ENCODE measurements at regions of chr12 and their contacts with region 1.

Region 1: GRCh38 chr12:65602610-65603295 is 221.5 kb upstream of the HMGA2 start:
- DNase-seq: peak; percentile 77
- H3K4me3 Mint-ChIP-seq: no peak overlapping the region
- H3K27ac Mint-ChIP-seq: no peak overlapping the region
- H3K4me1 Mint-ChIP-seq: peaks cover 2% of the 10 kb centered on the region
- H3K27me3 Mint-ChIP-seq: peaks cover 20% of the 10 kb centered on the region

Region 2: DNA sequence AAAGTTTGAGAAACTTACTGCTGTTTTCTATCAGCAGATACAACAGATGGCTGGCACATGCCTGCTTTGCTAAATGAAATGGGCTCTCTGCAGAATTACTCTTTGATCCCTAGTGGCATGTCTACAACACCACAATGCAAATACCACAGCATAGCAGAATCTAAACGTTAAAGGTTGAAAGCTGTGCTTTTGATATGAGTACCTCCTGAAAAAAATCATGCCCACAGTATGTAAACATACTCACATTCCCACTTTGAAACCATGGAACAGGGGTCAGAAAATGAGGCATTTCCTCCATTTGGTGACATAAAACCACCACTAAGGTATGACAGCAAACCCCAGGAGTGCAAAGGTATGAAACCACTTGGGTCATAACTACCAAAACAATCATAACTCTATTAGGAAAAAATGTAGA is 489.1 kb before region 1 on chr12:
- intact Hi-C with region 1: no loop called
- DNase-seq: no peak
- H3K4me3 Mint-ChIP-seq: no peak overlapping the region
- H3K27ac Mint-ChIP-seq: no peak overlapping the region
- H3K4me1 Mint-ChIP-seq: no peaks in the 10 kb centered on the region
- H3K27me3 Mint-ChIP-seq: peaks cover 47% of the 10 kb centered on the region

Region 3: GRCh38 chr12:65685514-65685913 is 82.8 kb after region 1 on chr12:
- intact Hi-C with region 1: loop called (anchors 1 kb)
- DNase-seq: no peak
- H3K4me3 Mint-ChIP-seq: no peak overlapping the region
- H3K27ac Mint-ChIP-seq: no peak overlapping the region
- H3K4me1 Mint-ChIP-seq: no peaks in the 10 kb centered on the region
- H3K27me3 Mint-ChIP-seq: no peaks in the 10 kb centered on the region

Region 4: DNA sequence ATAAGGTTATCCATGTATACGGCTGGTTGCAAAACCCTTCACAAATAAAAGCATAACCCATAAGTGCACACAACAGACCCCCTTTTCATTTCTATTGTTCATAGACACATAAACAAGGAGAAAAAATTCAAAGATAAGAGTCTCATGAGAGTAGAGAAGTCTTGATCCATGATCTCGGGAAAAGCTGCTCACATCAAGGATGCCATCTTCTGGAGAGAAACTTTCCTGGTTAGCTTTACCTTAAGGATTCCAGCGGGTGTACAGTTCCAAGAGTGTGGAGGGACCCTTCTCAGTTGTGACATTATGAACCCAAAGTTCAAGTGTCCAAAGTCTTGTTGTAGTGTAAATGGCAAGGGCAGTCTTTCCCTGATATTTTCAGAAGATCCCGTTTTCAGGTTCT is 383.3 kb after region 1 on chr12:
- intact Hi-C with region 1: loop called (anchors 1 kb)
- DNase-seq: no peak
- H3K4me3 Mint-ChIP-seq: no peak overlapping the region
- H3K27ac Mint-ChIP-seq: no peak overlapping the region
- H3K4me1 Mint-ChIP-seq: no peaks in the 10 kb centered on the region
- H3K27me3 Mint-ChIP-seq: peaks cover 10% of the 10 kb centered on the region

Region 5: DNA sequence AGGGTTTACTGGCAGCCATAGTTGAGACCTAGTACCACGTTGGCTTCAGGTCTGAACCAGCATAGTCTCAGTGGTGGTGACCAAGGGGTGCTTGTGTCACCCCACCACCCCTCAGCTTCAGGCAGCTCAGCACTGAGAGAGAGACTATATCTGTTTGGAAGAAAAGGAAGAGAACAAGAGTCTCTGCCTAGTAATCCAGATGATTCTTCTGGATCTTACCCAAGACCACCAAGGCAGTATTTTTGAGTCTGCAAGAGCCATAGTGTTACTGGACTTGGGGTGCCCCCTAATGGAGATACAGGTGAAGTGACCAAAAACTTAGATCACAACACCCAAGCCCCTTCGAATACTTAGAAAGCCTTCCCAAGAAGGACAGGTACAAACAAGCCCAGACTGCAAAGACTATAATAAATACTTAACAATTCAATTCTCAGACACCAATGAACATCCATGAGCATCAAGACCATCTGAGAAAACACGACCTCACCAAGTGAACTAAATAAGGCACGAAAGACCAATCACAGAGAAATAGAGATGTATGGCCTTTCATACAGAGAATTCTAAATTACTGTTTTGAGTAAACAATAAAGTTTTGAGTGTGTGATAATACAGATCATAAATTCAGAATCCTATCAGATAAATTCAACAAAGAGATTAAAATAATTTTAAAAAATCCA is 806.6 kb after region 1 on chr12:
- intact Hi-C with region 1: no loop called
- DNase-seq: peak; percentile 85
- H3K4me3 Mint-ChIP-seq: no peak overlapping the region
- H3K27ac Mint-ChIP-seq: no peak overlapping the region
- H3K4me1 Mint-ChIP-seq: no peaks in the 10 kb centered on the region
- H3K27me3 Mint-ChIP-seq: peaks cover 25% of the 10 kb centered on the region